Posterior vena cava (tissue), 2 donors: ENCODE measurements at regions of chr4 and their contacts with region 1.

Region 1: DNA sequence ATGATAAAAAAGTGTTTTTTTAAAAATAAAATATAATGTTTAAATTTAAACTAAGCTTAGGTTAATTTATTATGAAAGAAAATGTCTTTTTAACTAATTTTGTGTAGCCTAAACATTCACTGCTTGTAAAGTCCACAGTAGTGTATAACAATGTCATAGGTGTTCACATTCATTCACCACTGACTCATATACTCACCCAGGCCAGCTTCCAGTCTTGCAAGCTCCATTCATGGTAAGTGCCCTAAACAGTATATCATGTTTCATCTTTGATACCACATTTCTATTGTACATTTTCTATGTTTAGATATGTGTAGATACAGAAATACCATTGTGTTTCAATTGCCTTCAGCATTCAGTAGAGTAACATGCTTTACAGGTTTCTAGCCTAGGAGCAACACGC is 530.3 kb downstream of the EPHA5 start:
- DNase-seq: no peak

Region 2: DNA sequence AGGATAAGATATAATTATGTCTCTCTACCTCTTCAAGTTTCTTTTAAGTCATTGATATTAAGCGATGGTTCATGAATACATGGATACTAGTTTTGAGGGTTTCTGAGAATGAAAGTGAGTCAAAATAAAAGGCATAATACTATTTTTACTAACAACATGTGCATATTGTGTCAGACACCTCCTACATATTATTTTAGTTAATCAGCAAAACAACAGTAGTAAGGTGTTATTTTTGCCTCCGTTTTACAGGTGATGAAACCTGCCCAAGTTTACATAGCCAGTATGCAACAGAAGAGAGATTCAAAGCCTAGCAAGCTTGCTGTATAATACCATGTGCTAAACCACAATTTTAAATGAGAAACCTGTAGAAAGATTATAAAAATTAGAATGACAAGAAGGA is 13.8 kb before region 1 on chr4:
- intact Hi-C with region 1: loop called in 1 of 2 experiments (anchors 1 kb)
- DNase-seq: no peak

Region 3: DNA sequence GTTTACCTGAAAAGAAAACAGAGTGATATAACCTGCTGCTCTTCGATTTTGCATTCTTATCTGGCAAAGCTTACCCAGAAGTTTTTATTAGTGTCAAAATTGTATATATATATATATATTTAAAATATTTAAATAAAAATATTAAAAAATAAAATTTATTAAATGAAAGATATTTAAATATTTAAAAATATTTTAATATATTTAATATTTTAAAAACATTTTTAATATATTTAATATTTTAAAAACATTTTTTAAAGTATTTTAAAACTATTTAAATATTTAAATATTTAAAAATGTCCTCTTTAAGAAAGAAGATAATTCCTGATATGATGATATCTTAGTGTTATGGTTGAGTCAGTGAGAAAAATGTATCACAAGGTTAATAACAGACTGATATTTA is 213.1 kb after region 1 on chr4:
- intact Hi-C with region 1: no loop called
- DNase-seq: no peak